ENCODE measurements at regions of chr3 and their contacts with region 1.

Region 1: DNA sequence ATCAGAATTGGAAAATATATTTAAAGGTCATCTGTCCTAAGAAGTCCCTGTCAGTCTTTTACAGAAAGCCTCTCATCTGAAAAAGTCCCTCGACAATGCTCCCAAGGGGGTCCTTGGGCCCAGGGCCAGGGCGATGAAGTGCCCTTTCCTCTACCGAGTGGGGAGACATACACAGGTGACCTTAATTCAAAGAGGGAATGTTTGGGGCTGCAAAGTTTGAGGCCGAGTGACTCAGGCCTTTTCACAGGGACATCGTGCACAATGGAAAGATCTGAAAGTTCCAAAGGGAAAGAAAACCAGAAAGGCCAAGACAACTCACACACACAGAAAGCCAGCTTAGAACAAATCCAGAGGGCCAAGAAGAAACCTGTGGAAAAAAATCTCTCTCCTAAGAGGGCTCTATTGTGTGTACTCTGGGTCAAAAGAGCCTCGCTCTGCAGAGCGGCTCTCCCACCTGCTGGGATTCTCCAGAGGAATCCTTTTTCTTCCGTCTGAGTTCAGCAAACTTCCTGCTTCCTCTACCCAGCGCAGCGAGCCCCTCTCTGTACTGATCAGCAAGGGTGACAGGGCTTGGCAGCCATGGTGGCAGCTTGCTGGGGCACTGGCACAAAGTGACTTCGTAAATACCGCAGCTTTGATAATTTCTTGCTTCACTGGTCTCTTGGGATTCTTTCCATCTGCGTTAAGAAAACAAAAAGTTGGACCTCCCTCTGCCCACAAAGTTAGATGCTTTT is 259.1 kb downstream of the OPA1 start:
- DNase-seq: no peak
- H3K4me3 ChIP-seq: no peak overlapping the region
- H3K4me3 Mint-ChIP-seq: peak overlapping the region; percentile 20
- H3K27ac Mint-ChIP-seq: peak overlapping the region; percentile 84
- H3K4me1 ChIP-seq: peaks cover 56% of the 10 kb centered on the region
- H3K4me1 Mint-ChIP-seq: peaks cover 40% of the 10 kb centered on the region
- H3K27me3 ChIP-seq: no peaks in the 10 kb centered on the region
- H3K27me3 Mint-ChIP-seq: no peaks in the 10 kb centered on the region
- CTCF ChIP-seq: no peak

Region 2: GRCh38 chr3:193693774-193694173 is 158.3 kb before region 1 on chr3:
- CTCF ChIA-PET with region 1: no interaction called
- POLR2A ChIA-PET with region 1: no interaction called
- intact Hi-C with region 1: no loop called
- DNase-seq: no peak
- H3K4me3 ChIP-seq: no peak overlapping the region
- H3K4me3 Mint-ChIP-seq: no peak overlapping the region
- H3K27ac Mint-ChIP-seq: no peak overlapping the region
- H3K4me1 ChIP-seq: no peaks in the 10 kb centered on the region
- H3K4me1 Mint-ChIP-seq: no peaks in the 10 kb centered on the region
- H3K27me3 ChIP-seq: no peaks in the 10 kb centered on the region
- H3K27me3 Mint-ChIP-seq: no peaks in the 10 kb centered on the region
- CTCF ChIP-seq: no peak

Region 3: GRCh38 chr3:193794002-193794881 is 57.9 kb before region 1 on chr3:
- CTCF ChIA-PET with region 1: interaction called, 3 read pairs
- POLR2A ChIA-PET with region 1: no interaction called
- intact Hi-C with region 1: loop called (anchors 1 kb)
- DNase-seq: peak; percentile 58 to 65
- H3K4me3 ChIP-seq: no peak overlapping the region
- H3K4me3 Mint-ChIP-seq: peak overlapping the region; percentile 11
- H3K27ac Mint-ChIP-seq: peak overlapping the region; percentile 64
- H3K4me1 ChIP-seq: peaks cover 43% of the 10 kb centered on the region
- H3K4me1 Mint-ChIP-seq: peaks cover 47% of the 10 kb centered on the region
- H3K27me3 ChIP-seq: no peaks in the 10 kb centered on the region
- H3K27me3 Mint-ChIP-seq: no peaks in the 10 kb centered on the region
- CTCF ChIP-seq: no peak

Region 4: GRCh38 chr3:193872265-193872753 is 20.2 kb after region 1 on chr3:
- CTCF ChIA-PET with region 1: no interaction called
- POLR2A ChIA-PET with region 1: interaction called, 3 read pairs
- intact Hi-C with region 1: loop called (anchors 1 kb)
- DNase-seq: peak; percentile 91 to 94
- H3K4me3 ChIP-seq: no peak overlapping the region
- H3K4me3 Mint-ChIP-seq: peak overlapping the region; percentile 50
- H3K27ac Mint-ChIP-seq: peak overlapping the region; percentile 88
- H3K4me1 ChIP-seq: peaks cover 83% of the 10 kb centered on the region
- H3K4me1 Mint-ChIP-seq: peaks cover 74% of the 10 kb centered on the region
- H3K27me3 ChIP-seq: no peaks in the 10 kb centered on the region
- H3K27me3 Mint-ChIP-seq: no peaks in the 10 kb centered on the region
- CTCF ChIP-seq: no peak

Measured in Caco-2 (cell line).